ENCODE measurements at regions of chr1 and their contacts with region 1.

Region 1: GRCh38 chr1:9289090-9289534 is 3.6 kb upstream of the SPSB1 start:
- DNase-seq: peak in 1 of 2 donors; percentile 85
- ATAC-seq: no peak

Region 2: GRCh38 chr1:9376886-9377333 is 87.8 kb after region 1 on chr1:
- intact Hi-C with region 1: no loop called
- DNase-seq: peak in 1 of 2 donors; percentile 76
- ATAC-seq: no peak

Region 3: GRCh38 chr1:9455487-9456234 is 166.5 kb after region 1 on chr1:
- intact Hi-C with region 1: loop called (anchors 5 to 10 kb)
- DNase-seq: peak; percentile 45 to 86
- ATAC-seq: peak; percentile 72

Region 4: DNA sequence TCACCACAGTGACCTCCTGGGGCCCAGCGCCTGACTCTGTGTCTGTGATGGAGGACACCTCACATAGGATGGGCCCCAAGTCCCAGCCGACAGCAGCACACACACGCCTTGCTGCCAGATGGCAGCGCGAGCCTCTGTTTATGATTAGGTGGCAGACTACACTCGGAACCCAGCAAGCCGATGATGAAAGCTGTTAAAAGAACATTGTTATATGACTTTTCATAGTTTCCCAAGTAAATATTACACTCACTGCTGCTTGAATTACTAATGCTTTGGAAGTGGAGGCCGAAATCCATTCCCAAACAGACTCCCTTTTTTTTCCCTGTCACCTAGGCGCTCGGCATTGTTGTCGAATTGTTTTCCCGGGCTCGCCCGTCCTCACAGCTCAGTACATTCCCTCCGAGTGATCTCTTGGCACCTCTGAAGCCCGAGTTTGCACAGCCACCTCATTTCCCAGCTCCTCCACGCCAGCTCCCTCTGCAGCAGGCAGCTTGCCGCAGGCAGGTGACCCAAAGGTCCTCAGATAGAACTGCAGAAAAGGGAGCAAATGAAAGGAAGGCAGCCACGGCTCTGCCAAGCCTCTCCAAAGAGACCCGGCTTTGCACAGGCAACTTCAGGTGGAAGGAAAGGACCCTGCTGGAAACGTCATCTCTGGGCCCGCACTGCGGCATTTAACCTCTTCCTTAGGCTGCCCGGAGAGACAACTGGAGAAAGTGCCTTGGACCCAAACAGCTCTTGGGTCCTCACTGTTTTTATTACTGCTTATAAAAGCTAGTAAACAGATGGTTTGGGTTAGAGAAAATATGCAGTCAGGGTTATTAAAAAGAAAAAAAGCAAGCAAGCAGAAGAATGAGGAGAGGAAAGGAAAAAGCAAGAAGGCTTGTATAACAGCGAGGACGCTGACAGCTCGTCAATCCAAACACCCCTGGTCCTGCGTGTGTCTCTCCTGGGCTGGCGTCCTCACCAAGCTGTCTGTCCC is 178.0 kb after region 1 on chr1:
- intact Hi-C with region 1: no loop called
- DNase-seq: peak in 1 of 2 donors; percentile 31
- ATAC-seq: peak; percentile 81

Region 5: GRCh38 chr1:9494929-9495758 is 206.0 kb after region 1 on chr1:
- intact Hi-C with region 1: loop called in 1 of 2 experiments (anchors 10 kb)
- DNase-seq: peak in 1 of 2 donors; percentile 65
- ATAC-seq: peak; percentile 69

Measured in left colon (tissue), 2 donors.